ENCODE measurements at regions of chr5 and their contacts with region 1.

Region 1: GRCh38 chr5:168219515-168220410 is 71.7 kb upstream of the WWC1 start:
- DNase-seq: no peak
- ATAC-seq: peak in 2 of 4 donors; percentile 48 to 69
- H3K4me3 ChIP-seq: no peak overlapping the region
- H3K27ac ChIP-seq: no peak overlapping the region
- H3K4me1 ChIP-seq: no peaks in the 10 kb centered on the region
- H3K27me3 ChIP-seq: peaks cover 0 to 2% (median 0%) of the 10 kb centered on the region in 3 donors
- CTCF ChIP-seq: peak; percentile 73

Region 2: DNA sequence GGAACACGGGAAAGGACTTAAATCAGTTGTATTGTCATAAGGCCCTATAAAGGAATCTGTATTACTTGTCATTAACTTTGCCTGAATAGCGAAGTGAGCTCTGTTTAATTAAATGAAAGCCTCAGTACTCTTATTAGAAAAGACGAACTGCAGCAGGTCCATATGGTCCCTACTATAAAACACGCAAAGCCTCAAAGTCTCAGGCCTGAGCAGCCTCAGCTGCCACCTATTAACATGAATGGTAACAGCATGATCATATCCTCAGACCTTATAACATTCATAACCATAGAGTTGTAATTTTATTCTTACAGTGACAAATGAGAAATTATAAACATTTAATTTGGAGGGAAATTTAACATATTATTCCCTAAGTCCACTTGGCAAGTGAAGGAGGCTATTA is 1042.0 kb before region 1 on chr5:
- intact Hi-C with region 1: no loop called
- DNase-seq: no peak
- ATAC-seq: no peak
- H3K4me3 ChIP-seq: no peak overlapping the region
- H3K27ac ChIP-seq: no peak overlapping the region
- H3K4me1 ChIP-seq: no peaks in the 10 kb centered on the region
- H3K27me3 ChIP-seq: no peaks in the 10 kb centered on the region
- CTCF ChIP-seq: no peak

Region 3: GRCh38 chr5:167207081-167207480 is 1012.7 kb before region 1 on chr5:
- intact Hi-C with region 1: no loop called
- DNase-seq: no peak
- ATAC-seq: no peak
- H3K4me3 ChIP-seq: no peak overlapping the region
- H3K27ac ChIP-seq: no peak overlapping the region
- H3K4me1 ChIP-seq: no peaks in the 10 kb centered on the region
- H3K27me3 ChIP-seq: no peaks in the 10 kb centered on the region
- CTCF ChIP-seq: no peak

Region 4: GRCh38 chr5:167723254-167723871 is 496.4 kb before region 1 on chr5:
- intact Hi-C with region 1: loop called (anchors 5 to 10 kb)
- DNase-seq: peak; percentile 43 to 68
- ATAC-seq: peak in 1 of 4 donors; percentile 46
- H3K4me3 ChIP-seq: no peak overlapping the region
- H3K27ac ChIP-seq: no peak overlapping the region
- H3K4me1 ChIP-seq: no peaks in the 10 kb centered on the region
- H3K27me3 ChIP-seq: no peaks in the 10 kb centered on the region
- CTCF ChIP-seq: peak; percentile 67

Region 5: GRCh38 chr5:168152660-168153059 is 67.1 kb before region 1 on chr5:
- intact Hi-C with region 1: no loop called
- DNase-seq: no peak
- ATAC-seq: no peak
- H3K4me3 ChIP-seq: no peak overlapping the region
- H3K27ac ChIP-seq: no peak overlapping the region
- H3K4me1 ChIP-seq: no peaks in the 10 kb centered on the region
- H3K27me3 ChIP-seq: no peaks in the 10 kb centered on the region
- CTCF ChIP-seq: no peak

Region 6: DNA sequence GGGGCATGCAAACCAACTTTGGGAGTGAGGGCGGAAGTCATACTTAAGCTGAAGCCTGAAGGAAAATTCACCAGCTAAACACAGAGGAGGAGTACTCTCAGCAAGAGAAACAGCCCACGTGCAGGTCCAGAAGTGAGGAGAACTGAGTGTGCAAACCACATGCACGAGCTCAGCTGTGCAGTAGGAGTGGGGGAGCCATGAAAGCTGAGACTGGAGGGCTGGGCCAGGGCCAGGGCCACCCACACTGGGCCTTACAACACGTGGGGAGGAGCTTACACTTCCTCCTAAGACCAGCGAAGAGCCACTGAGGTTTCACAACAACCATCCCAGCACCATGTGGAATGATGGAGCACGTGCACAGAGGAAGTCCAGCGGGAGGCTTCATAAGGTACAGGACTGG is 62.4 kb after region 1 on chr5:
- intact Hi-C with region 1: no loop called
- DNase-seq: no peak
- ATAC-seq: no peak
- H3K4me3 ChIP-seq: no peak overlapping the region
- H3K27ac ChIP-seq: no peak overlapping the region
- H3K4me1 ChIP-seq: no peaks in the 10 kb centered on the region
- H3K27me3 ChIP-seq: peaks cover 0 to 3% (median 0%) of the 10 kb centered on the region in 3 donors
- CTCF ChIP-seq: no peak

Measured in psoas muscle (tissue), 8 donors.